ENCODE measurements at regions of chr21 and their contacts with region 1.

Region 1: GRCh38 chr21:33588485-33589335 is at the start of gene DONSON:
- DNase-seq: peak; percentile 98
- ATAC-seq: peak; percentile 95
- H3K4me3 Mint-ChIP-seq: peak within 1 kb of the TSS; percentile 97
- H3K27ac Mint-ChIP-seq: peak within 1 kb of the TSS; percentile 89
- H3K4me1 Mint-ChIP-seq: peaks cover 25% of the 10 kb centered on the region
- H3K27me3 Mint-ChIP-seq: no peaks in the 10 kb centered on the region
- total RNA-seq, gene DONSON: 29.0 to 33.6 TPM

Region 2: DNA sequence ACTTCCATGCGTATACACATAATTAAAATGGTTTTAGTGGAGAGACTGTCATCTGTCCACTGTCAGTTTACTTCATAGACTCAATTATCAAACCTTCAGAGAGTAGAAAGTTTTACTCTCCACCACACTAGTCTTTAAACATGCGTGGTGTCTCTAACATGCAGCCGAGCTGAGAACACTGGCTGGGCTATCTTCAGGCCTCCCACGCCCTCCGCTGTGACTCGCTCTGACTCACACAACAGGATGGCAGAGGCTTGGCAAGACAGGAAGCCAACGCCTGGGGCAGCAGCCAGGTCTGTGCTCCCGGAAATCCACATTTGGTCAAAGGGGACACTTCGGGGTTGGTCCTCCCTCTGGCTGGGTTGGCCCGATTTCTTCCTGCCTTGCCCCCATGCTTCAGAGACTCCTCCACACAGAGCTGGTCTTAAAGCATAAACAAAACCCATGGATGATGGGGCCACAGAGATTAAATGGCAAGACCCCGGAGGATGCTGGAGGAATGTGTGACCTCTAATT is 208.2 kb before region 1 on chr21:
- POLR2A ChIA-PET with region 1: no interaction called
- DNase-seq: peak; percentile 72
- ATAC-seq: peak; percentile 79
- H3K4me3 Mint-ChIP-seq: peak overlapping the region; percentile 57
- H3K27ac Mint-ChIP-seq: peak overlapping the region; percentile 82
- H3K4me1 Mint-ChIP-seq: peaks cover 55% of the 10 kb centered on the region
- H3K27me3 Mint-ChIP-seq: peaks cover 15% of the 10 kb centered on the region

Region 3: GRCh38 chr21:33542640-33543504 is 45.8 kb before region 1 on chr21 and contains the start of gene SON:
- POLR2A ChIA-PET with region 1: interaction called, 36 read pairs
- DNase-seq: peak; percentile 92
- ATAC-seq: peak; percentile 96
- H3K4me3 Mint-ChIP-seq: peak within 1 kb of the TSS; percentile 96
- H3K27ac Mint-ChIP-seq: peak within 1 kb of the TSS; percentile 99
- H3K4me1 Mint-ChIP-seq: peaks cover 38% of the 10 kb centered on the region
- H3K27me3 Mint-ChIP-seq: no peaks in the 10 kb centered on the region
- total RNA-seq, gene SON: 357 to 376 TPM

Region 4: GRCh38 chr21:33554982-33555344 is 33.7 kb before region 1 on chr21:
- POLR2A ChIA-PET with region 1: interaction called, 10 read pairs
- DNase-seq: no peak
- ATAC-seq: no peak
- H3K4me3 Mint-ChIP-seq: no peak overlapping the region
- H3K27ac Mint-ChIP-seq: no peak overlapping the region
- H3K4me1 Mint-ChIP-seq: peaks cover 23% of the 10 kb centered on the region
- H3K27me3 Mint-ChIP-seq: no peaks in the 10 kb centered on the region

Region 5: GRCh38 chr21:33608559-33608958 is 19.8 kb after region 1 on chr21:
- POLR2A ChIA-PET with region 1: interaction called, 11 read pairs
- DNase-seq: no peak
- ATAC-seq: no peak
- H3K4me3 Mint-ChIP-seq: no peak overlapping the region
- H3K27ac Mint-ChIP-seq: no peak overlapping the region
- H3K4me1 Mint-ChIP-seq: peaks cover 5% of the 10 kb centered on the region
- H3K27me3 Mint-ChIP-seq: no peaks in the 10 kb centered on the region